Naive thymus-derived CD4-positive, alpha-beta T cell (primary cell): ENCODE measurements at regions of chr7 and their contacts with region 1.

Region 1: GRCh38 chr7:92057362-92057761 is 76.9 kb downstream of the CYP51A1 start:
- DNase-seq: no peak
- ATAC-seq: no peak
- H3K4me3 ChIP-seq: no peak overlapping the region
- H3K4me3 Mint-ChIP-seq: peak overlapping the region in 7 of 10 donors; percentile 16 to 78 (median 70)
- H3K27ac ChIP-seq: no peak overlapping the region
- H3K27ac Mint-ChIP-seq: peak overlapping the region in 3 of 9 donors; percentile 31 to 58 (median 34)
- H3K4me1 ChIP-seq: peaks cover 10 to 12% of the 10 kb centered on the region in 2 donors
- H3K4me1 Mint-ChIP-seq: peaks cover 7 to 32% (median 19%) of the 10 kb centered on the region in 7 donors
- H3K27me3 ChIP-seq: no peaks in the 10 kb centered on the region
- H3K27me3 Mint-ChIP-seq: no peaks in the 10 kb centered on the region

Region 2: GRCh38 chr7:91752102-91752501 is 305.3 kb before region 1 on chr7:
- CTCF ChIA-PET with region 1: no interaction called
- POLR2A ChIA-PET with region 1: no interaction called
- intact Hi-C with region 1: no loop called
- DNase-seq: no peak
- ATAC-seq: no peak
- H3K4me3 ChIP-seq: no peak overlapping the region
- H3K4me3 Mint-ChIP-seq: no peak overlapping the region
- H3K27ac ChIP-seq: no peak overlapping the region
- H3K27ac Mint-ChIP-seq: no peak overlapping the region
- H3K4me1 ChIP-seq: no peaks in the 10 kb centered on the region
- H3K4me1 Mint-ChIP-seq: no peaks in the 10 kb centered on the region
- H3K27me3 ChIP-seq: no peaks in the 10 kb centered on the region
- H3K27me3 Mint-ChIP-seq: peaks cover 0 to 4% (median 0%) of the 10 kb centered on the region in 5 donors

Region 3: GRCh38 chr7:92115821-92116220 is 58.5 kb after region 1 on chr7:
- CTCF ChIA-PET with region 1: no interaction called
- POLR2A ChIA-PET with region 1: no interaction called
- intact Hi-C with region 1: no loop called
- DNase-seq: no peak
- ATAC-seq: no peak
- H3K4me3 ChIP-seq: no peak overlapping the region
- H3K4me3 Mint-ChIP-seq: no peak overlapping the region
- H3K27ac ChIP-seq: no peak overlapping the region
- H3K27ac Mint-ChIP-seq: peak overlapping the region in 2 of 9 donors; percentile 23 to 44
- H3K4me1 ChIP-seq: no peaks in the 10 kb centered on the region
- H3K4me1 Mint-ChIP-seq: peaks cover 0 to 15% (median 4%) of the 10 kb centered on the region in 7 donors
- H3K27me3 ChIP-seq: no peaks in the 10 kb centered on the region
- H3K27me3 Mint-ChIP-seq: no peaks in the 10 kb centered on the region

Region 4: GRCh38 chr7:92228100-92228499 is 170.7 kb after region 1 on chr7:
- CTCF ChIA-PET with region 1: no interaction called
- POLR2A ChIA-PET with region 1: no interaction called
- intact Hi-C with region 1: loop called in 1 of 2 experiments (anchors 10 kb)
- DNase-seq: no peak
- ATAC-seq: no peak
- H3K4me3 ChIP-seq: no peak overlapping the region
- H3K4me3 Mint-ChIP-seq: no peak overlapping the region
- H3K27ac ChIP-seq: no peak overlapping the region
- H3K27ac Mint-ChIP-seq: peak overlapping the region in 3 of 9 donors; percentile 9 to 14 (median 9)
- H3K4me1 ChIP-seq: no peaks in the 10 kb centered on the region
- H3K4me1 Mint-ChIP-seq: peaks cover 0 to 2% (median 0%) of the 10 kb centered on the region in 7 donors
- H3K27me3 ChIP-seq: no peaks in the 10 kb centered on the region
- H3K27me3 Mint-ChIP-seq: no peaks in the 10 kb centered on the region